ENCODE measurements at regions of chr2 and their contacts with region 1.

Region 1: GRCh38 chr2:73156539-73157124 is 43.9 kb upstream of the RAB11FIP5 start:
- DNase-seq: peak; percentile 60
- ATAC-seq: peak; percentile 80
- H3K4me3 ChIP-seq: no peak overlapping the region
- H3K27ac ChIP-seq: no peak overlapping the region
- H3K4me1 ChIP-seq: peaks cover 5% of the 10 kb centered on the region
- H3K27me3 ChIP-seq: peaks cover 24% of the 10 kb centered on the region
- CTCF ChIP-seq: peak; percentile 72

Region 2: DNA sequence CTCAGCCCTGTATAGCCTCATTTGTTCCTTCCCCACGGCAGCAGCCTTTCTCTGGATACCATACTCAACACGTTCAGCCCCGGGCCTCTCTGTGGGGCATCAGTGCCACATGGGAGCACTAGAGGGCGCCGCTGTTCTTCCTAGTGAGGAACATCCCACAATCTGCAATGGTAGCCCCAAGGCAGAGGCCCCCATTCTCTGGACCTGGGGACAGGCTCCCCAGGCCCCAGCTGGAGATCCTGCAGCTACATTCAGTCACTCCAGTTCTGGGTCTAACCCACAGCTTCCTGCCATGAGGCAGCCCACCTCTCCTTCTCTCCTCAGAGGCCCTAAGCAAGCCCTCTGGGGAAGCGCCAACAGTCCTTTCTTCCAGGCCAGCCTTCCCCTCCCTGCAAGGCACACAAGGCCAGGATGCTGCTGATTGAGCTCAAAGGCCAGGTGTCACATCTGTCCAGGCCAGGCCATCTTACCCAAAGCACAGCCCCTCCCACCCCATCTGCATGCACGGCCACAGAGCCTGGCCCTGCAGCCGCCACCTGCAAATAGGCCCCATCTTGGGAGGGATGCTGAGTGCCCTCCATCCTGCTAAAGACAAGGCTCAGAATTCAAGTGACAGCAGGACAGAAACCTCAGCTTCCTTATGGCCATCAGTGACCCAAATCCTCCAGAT is 70.8 kb before region 1 on chr2:
- intact Hi-C with region 1: loop called (anchors 10 kb)
- DNase-seq: peak; percentile 91
- ATAC-seq: peak; percentile 76 to 77
- H3K4me3 ChIP-seq: no peak overlapping the region
- H3K27ac ChIP-seq: no peak overlapping the region
- H3K4me1 ChIP-seq: peaks cover 4% of the 10 kb centered on the region
- H3K27me3 ChIP-seq: no peaks in the 10 kb centered on the region
- CTCF ChIP-seq: peak; percentile 95